ENCODE measurements at regions of chrX and their contacts with region 1.

Region 1: GRCh38 chrX:74133156-74133796 is 170.7 kb upstream of the ZCCHC13 start:
- DNase-seq: no peak
- ATAC-seq: peak; percentile 49 to 68

Region 2: GRCh38 chrX:73668779-73669178 is 464.5 kb before region 1 on chrX:
- intact Hi-C with region 1: no loop called
- DNase-seq: peak; percentile 23
- ATAC-seq: peak; percentile 53 to 57

Region 3: DNA sequence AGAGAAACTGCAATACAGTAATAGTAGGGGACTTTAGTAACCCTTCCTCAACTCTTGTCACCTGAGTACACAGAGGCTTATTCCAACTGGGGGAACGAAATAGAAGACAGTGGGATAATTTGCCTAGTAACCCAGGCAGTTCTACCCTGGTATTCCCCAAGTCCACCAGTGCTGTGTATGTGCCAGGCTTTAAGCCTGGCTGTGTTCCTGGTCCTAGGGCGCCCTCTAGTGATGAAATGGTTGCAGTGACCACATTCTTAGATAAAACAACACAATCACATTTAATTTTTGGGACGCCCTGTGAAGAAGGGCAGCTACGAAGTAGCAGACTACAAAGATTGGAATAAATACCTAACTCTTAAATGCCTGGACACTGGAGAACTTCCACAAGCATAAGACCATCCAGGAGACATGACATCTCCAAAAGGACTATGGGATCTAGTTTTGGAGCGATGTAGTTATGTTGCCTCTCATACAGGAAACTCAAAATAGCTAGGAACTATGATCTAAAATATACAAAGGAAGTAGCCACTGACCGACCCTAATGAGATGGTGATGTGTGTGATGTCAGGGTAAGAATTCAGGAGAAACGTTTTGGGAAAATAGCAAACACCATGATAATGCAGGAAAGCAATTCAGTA is 117.8 kb before region 1 on chrX:
- intact Hi-C with region 1: loop called in 1 of 2 experiments (anchors 5 kb)
- DNase-seq: peak; percentile 60
- ATAC-seq: peak; percentile 70 to 74

Region 4: DNA sequence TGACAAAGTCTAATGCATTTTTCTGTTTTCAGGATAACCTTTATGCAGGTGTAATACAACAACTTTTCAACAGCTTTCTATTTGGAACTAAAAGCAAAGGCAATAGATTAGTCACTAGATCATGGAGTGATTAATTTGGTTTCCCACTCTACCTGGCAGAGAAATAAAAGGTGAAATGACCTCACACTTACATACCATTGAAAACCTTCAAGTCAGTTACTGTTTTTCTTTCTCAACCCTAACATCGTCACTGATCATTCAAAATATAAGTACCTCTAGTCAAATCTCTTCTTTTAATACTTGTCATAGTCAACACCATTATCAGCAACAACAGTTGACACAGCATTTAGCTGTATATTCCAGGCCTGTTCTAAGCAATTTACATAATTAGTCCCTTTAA is 85.6 kb after region 1 on chrX:
- intact Hi-C with region 1: no loop called
- DNase-seq: no peak
- ATAC-seq: no peak